ENCODE measurements at regions of chrX and their contacts with region 1.

Region 1: DNA sequence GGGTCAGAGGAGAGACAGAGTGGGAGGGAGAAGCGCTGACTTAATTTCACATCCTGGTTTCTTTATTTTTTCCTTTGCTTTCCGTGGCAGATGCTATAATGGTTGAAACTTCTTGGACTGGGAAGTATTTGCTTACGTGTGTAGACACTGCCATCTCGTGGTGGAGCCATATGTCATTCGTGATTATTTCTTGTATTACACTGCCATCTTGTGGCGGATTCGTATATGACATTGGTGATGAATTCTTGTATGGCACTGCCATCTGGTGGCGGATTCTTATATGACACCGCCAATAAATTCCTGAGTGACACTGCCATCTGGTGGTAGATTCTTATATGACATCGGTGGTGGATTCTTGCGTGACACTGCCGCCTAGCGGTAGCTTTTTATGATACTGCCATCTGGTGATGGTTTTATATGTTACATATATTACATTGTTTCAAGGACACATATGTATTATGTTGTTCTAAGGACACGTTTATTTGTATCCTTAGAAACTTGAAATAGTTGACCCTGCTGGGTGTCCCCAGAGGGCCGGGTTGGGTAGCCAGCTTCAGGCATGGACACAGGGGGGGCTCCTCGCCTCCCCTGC is 37.3 kb upstream of the CLCN4 start:
- DNase-seq: peak; percentile 72
- H3K4me3 Mint-ChIP-seq: no peak overlapping the region
- H3K27ac Mint-ChIP-seq: peak overlapping the region; percentile 71
- H3K4me1 Mint-ChIP-seq: peaks cover 19% of the 10 kb centered on the region
- H3K27me3 Mint-ChIP-seq: no peaks in the 10 kb centered on the region

Region 2: DNA sequence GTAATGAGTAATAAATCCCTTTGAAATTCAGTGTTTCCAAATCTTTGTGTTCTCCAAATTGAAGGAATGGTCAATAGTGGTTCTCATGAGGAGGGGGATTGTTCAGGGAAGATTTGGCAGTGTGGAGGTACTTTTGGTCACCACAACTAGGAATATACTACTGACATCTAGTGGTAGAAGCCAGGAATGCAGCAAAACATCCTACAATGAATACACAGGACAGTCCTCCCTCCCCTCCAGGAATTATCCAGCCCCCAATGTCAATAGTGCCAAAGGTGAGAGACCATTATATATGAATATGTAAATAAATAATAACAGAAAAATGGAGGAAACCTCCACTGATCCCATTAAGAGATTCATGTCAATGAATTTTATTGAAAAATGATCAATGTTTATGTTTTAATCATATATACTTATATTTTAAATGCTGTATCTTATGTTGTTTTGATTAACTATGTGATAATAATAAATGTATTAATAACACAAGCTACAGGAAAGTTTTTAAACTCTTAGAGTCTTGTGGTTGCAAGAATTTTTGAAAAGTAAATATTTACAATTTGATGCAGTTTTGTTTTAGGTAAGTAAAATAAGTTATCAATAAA is 1303.9 kb before region 1 on chrX:
- CTCF ChIA-PET with region 1: no interaction called
- POLR2A ChIA-PET with region 1: no interaction called
- intact Hi-C with region 1: loop called (anchors 2 kb)
- DNase-seq: no peak
- H3K4me3 Mint-ChIP-seq: no peak overlapping the region
- H3K27ac Mint-ChIP-seq: no peak overlapping the region
- H3K4me1 Mint-ChIP-seq: no peaks in the 10 kb centered on the region
- H3K27me3 Mint-ChIP-seq: peaks cover 2% of the 10 kb centered on the region

Region 3: GRCh38 chrX:9885150-9885549 is 234.3 kb before region 1 on chrX:
- CTCF ChIA-PET with region 1: interaction called, 6 read pairs
- POLR2A ChIA-PET with region 1: no interaction called
- intact Hi-C with region 1: loop called (anchors 1 kb)
- DNase-seq: peak; percentile 69
- H3K4me3 Mint-ChIP-seq: no peak overlapping the region
- H3K27ac Mint-ChIP-seq: no peak overlapping the region
- H3K4me1 Mint-ChIP-seq: peaks cover 1% of the 10 kb centered on the region
- H3K27me3 Mint-ChIP-seq: peaks cover 5% of the 10 kb centered on the region

Region 4: DNA sequence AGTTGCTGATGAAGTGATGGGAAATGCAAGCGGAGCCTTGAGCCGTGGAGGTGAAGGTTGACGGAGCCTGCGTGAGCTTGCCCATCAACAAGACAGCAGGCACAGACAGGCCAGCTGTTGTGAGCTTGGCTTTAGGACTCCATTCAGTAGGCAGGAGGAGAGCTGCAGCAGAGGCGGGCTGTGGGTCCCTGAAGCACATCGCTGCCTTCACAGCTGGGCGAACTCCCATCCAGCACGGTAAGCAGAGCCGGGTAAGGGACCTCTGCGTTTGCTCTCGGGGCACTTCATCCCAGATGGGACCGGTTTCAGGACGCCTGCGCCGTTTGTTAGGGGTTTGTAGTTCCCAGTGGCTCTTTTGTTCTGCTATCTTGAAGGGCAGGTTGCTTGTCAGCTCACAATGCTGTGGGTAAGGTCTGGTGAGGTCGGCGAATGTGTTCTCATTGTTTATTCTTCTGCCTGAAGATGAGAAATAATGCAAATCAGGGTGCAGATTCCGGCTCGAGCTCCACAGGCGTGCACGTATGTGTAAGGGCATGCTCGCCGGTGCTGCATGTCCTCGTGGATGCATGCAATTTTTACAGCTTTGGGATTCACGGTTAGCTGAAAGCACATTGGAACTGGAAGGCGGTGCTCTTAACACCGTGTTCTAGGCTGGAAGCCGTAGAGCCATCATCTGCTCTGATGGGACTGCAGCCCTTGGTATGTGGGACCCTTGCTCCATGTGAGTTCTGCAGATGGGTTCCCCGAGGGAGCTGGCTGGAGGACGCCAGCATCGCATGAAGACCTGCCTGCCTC is 206.9 kb before region 1 on chrX:
- CTCF ChIA-PET with region 1: no interaction called
- POLR2A ChIA-PET with region 1: no interaction called
- intact Hi-C with region 1: no loop called
- DNase-seq: no peak
- H3K4me3 Mint-ChIP-seq: no peak overlapping the region
- H3K27ac Mint-ChIP-seq: no peak overlapping the region
- H3K4me1 Mint-ChIP-seq: no peaks in the 10 kb centered on the region
- H3K27me3 Mint-ChIP-seq: peaks cover 19% of the 10 kb centered on the region

Region 5: DNA sequence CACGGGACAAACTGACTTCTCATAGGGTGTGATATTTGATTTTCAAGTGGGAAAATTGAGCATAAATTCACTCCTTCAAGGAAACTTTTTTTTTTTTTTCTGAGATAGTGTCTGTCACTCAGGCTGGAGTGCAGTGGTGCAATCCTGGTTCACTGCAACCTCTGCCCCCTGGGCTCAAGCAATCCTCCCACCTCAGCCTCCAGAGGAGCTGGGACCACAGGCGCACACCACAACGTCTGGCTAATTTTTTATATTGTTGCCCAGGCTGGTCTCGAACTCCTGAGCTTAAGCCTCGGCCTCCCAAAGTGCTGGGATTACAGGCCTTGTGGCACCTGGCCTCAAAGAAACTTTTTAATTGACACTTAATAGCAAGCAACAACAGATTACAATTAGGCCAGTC is 138.6 kb before region 1 on chrX:
- CTCF ChIA-PET with region 1: interaction called, 10 read pairs
- POLR2A ChIA-PET with region 1: no interaction called
- intact Hi-C with region 1: no loop called
- DNase-seq: no peak
- H3K4me3 Mint-ChIP-seq: no peak overlapping the region
- H3K27ac Mint-ChIP-seq: no peak overlapping the region
- H3K4me1 Mint-ChIP-seq: no peaks in the 10 kb centered on the region
- H3K27me3 Mint-ChIP-seq: no peaks in the 10 kb centered on the region

Region 6: DNA sequence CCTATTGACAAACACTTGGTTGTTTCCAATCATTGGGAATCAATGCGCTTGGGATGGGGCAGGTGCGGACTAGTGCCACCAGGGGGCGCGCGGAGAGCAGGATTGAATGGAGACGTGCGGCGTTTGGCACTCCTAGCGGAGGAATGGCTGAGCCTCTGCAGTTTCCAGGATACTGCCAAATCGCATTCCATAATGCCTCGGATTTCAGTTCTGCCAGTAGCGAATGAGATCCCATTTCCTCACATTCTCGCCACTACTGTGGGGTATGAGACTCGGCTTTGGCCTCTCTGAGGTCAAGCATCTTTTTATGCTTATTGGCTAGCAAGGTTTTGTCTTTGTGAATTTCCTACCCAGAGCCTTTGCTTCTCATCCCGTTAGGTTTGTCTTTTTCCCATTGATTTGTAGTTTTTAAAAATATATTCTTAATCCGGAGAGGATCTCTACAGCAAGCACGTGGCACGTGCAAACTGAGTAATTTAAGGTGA is 123.6 kb before region 1 on chrX:
- CTCF ChIA-PET with region 1: interaction called, 121 read pairs
- POLR2A ChIA-PET with region 1: interaction called, 4 read pairs
- intact Hi-C with region 1: loop called (anchors 1 kb)
- DNase-seq: peak; percentile 78
- H3K4me3 Mint-ChIP-seq: no peak overlapping the region
- H3K27ac Mint-ChIP-seq: no peak overlapping the region
- H3K4me1 Mint-ChIP-seq: peaks cover 20% of the 10 kb centered on the region
- H3K27me3 Mint-ChIP-seq: no peaks in the 10 kb centered on the region

Measured in activated CD4-positive, alpha-beta memory T cell treated with anti-CD3 and anti-CD28 coated beads for 36 hours (primary cell).